ENCODE measurements at regions of chr10 and their contacts with region 1.

Region 1: DNA sequence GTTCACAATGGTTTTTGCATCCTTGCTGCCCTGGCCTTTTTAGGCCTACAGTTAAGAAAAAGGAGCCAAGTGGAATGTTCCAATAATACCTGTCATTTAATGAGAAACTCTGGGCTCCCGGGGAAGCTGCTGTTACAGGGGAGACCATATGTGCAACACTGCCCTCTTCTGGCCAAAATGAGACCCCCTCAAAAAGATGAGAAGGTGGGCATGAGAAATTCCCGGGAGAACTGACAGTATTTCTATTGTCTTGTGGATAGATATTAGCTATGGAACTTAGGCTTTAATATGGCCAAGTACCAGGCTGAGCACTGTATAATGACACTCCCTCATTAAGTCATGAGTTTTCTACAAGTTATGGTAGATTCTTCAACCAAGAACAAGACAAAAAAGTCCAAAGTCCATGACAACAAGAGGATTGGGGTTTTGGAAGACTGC is 99.4 kb downstream of the CCDC3 start:
- DNase-seq: peak; percentile 66
- ATAC-seq: peak; percentile 49 to 64

Region 2: DNA sequence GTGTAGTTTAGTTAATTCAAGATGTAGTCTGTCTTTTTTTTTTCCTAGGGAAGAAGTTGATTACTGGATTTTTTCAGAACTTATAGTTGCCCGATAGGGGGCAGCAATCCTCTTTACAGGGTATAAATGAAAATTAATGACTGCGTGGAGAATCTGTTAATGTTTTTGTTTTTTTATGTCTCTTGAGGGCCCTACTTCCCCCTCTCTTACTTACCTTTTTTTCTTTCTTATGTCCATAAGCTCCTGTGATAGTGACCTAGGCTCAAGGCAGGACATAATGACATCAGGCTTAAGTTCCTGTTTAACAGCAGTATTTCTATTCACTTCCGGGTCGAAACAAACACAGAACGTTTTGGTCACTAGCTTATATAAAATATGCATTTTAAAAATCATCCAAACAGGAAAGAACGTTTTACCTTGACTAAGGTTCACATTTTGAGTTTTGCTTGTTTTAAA is 687.4 kb before region 1 on chr10:
- intact Hi-C with region 1: loop called in 1 of 2 experiments (anchors 10 kb)
- DNase-seq: no peak
- ATAC-seq: peak in 1 of 2 donors; percentile 41

Region 3: DNA sequence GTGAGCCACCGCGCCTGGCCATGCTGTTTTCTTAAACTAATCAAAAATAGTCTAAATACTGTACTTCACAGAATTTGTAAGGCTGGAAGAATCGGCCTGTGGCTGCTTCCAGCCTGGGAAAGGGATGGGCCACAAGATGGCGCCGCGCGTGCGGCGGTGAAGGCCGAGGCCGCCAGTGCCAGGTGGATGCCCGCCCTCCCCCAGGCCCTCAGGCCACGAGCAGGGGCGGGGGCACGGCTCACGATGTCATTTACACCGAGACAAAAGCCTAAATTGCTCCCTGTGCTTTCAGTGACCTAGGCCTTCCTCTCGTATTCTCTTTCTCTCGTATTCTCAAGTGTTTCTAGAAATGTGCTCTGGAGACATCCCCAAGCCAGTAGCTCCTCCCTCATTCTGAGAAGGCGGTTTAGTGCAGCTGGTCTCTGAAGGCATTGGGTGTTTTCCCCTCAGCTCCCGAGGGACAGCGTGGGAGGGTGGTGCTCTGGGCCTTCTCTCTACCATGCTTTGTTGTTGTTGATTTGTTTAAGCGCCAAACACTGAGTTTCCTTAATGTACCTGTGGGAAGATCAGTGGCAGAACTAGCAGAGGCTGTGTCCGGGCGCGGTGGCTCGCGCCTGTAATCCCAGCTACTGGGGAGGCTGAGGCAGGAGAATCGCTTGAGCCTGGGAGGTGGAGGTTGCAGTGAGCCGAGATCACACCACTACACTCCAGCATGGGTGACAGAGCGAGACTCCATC is 637.8 kb before region 1 on chr10:
- intact Hi-C with region 1: loop called in 1 of 2 experiments (anchors 5 kb)
- DNase-seq: peak; percentile 84
- ATAC-seq: peak; percentile 91 to 95

Region 4: GRCh38 chr10:12710594-12711349 is 191.4 kb before region 1 on chr10:
- intact Hi-C with region 1: loop called in 1 of 2 experiments (anchors 10 kb)
- DNase-seq: peak; percentile 75
- ATAC-seq: peak; percentile 52 to 66

Region 5: GRCh38 chr10:12720217-12720981 is 181.8 kb before region 1 on chr10:
- intact Hi-C with region 1: loop called (anchors 5 to 10 kb)
- DNase-seq: peak; percentile 90
- ATAC-seq: peak; percentile 79 to 84

Region 6: GRCh38 chr10:12782537-12782936 is 119.6 kb before region 1 on chr10:
- intact Hi-C with region 1: loop called in 1 of 2 experiments (anchors 10 kb)
- DNase-seq: peak; percentile 47
- ATAC-seq: peak in 1 of 2 donors; percentile 23

Region 7: GRCh38 chr10:13062803-13063202 is 160.6 kb after region 1 on chr10:
- intact Hi-C with region 1: loop called in 1 of 2 experiments (anchors 10 kb)
- DNase-seq: no peak
- ATAC-seq: no peak

Region 8: GRCh38 chr10:13152308-13152707 is 250.2 kb after region 1 on chr10:
- intact Hi-C with region 1: no loop called
- DNase-seq: no peak
- ATAC-seq: no peak

Measured in left cardiac atrium (tissue), 4 donors.